CD8-positive, alpha-beta T cell (primary cell): ENCODE measurements at regions of chr17 and their contacts with region 1.

Region 1: DNA sequence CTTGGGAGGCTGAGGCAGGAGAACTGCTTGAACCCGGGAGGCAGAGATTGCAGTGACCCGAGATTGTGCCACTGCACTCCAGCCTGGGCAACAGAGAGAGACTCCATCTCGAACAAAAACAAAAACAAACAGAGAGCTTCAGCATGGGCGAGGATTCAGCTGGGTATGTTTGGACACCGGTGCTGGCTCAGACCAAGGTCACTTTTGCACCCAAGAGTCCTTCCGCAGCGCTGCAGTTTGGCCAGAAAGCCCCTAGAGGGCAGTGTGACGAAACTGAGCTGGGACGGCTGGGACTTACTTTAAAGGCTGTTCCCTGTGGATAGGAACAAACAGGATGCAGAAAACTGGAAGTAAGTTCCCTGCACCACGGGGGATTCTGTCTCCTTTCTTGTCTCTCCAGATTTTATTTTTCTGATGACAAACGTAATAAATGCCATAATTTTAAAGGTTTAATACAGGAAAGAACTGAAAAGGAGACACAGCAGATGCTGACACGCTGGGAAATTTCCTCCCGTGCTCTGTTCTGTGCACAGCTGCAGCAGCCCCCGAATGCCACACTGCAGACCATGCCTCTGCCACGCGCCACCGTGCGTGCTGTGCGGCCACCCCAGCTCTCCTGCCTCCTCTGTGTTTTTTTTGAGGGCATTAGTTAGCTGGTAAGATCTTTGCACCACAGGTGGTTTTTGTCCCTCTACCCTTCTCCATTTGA is 25.2 kb upstream of the USP36 start:
- DNase-seq: peak in 8 of 9 experiments; percentile 34 to 79 (median 66)
- ATAC-seq: peak; percentile 57
- H3K4me3 ChIP-seq: no peak overlapping the region
- H3K4me3 Mint-ChIP-seq: no peak overlapping the region
- H3K27ac ChIP-seq: no peak overlapping the region
- H3K27ac Mint-ChIP-seq: no peak overlapping the region
- H3K4me1 ChIP-seq: no peaks in the 10 kb centered on the region
- H3K4me1 Mint-ChIP-seq: peaks cover 3% of the 10 kb centered on the region
- H3K27me3 ChIP-seq: no peaks in the 10 kb centered on the region
- H3K27me3 Mint-ChIP-seq: peaks cover 5% of the 10 kb centered on the region
- CTCF ChIP-seq: peak; percentile 97

Region 2: GRCh38 chr17:78852709-78853121 is 13.1 kb before region 1 on chr17:
- CTCF ChIA-PET with region 1: interaction called, 30 read pairs
- POLR2A ChIA-PET with region 1: no interaction called
- intact Hi-C with region 1: no loop called
- DNase-seq: no peak
- ATAC-seq: no peak
- H3K4me3 ChIP-seq: no peak overlapping the region
- H3K4me3 Mint-ChIP-seq: no peak overlapping the region
- H3K27ac ChIP-seq: no peak overlapping the region
- H3K27ac Mint-ChIP-seq: no peak overlapping the region
- H3K4me1 ChIP-seq: no peaks in the 10 kb centered on the region
- H3K4me1 Mint-ChIP-seq: no peaks in the 10 kb centered on the region
- H3K27me3 ChIP-seq: no peaks in the 10 kb centered on the region
- H3K27me3 Mint-ChIP-seq: no peaks in the 10 kb centered on the region
- CTCF ChIP-seq: no peak

Region 3: DNA sequence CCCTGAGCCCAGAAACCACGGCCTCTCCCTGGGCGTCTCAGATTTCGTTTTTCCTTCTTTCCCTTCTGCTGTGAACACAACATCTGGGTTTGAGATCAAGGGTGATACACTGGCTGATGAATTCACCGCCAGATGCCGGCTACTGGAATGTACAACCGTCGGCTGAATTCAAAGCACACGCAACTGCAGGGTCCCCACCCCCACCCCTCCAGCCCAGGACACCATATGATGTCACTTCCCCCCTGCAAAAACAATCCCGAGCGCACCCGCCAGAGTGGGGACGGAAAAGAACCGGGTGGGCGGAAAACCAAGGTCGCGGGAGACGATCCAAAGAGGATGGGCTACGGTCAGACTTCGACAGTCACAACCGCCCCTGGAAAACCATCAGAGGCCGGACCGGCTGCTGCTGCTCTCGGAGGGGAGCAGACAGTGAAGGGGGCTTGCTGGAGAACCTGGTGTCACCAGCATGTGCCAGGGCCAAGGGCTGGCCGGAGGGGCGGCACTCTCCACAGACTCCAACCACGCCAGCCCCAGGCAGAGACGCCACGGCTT is 13.9 kb after region 1 on chr17:
- CTCF ChIA-PET with region 1: interaction called, 16 read pairs
- POLR2A ChIA-PET with region 1: no interaction called
- intact Hi-C with region 1: no loop called
- DNase-seq: peak in 5 of 9 experiments; percentile 20 to 68 (median 48)
- ATAC-seq: peak; percentile 51
- H3K4me3 ChIP-seq: peak overlapping the region; percentile 29 to 38
- H3K4me3 Mint-ChIP-seq: peak overlapping the region; percentile 78
- H3K27ac ChIP-seq: peak overlapping the region in 1 of 2 experiments; percentile 39
- H3K27ac Mint-ChIP-seq: peak overlapping the region; percentile 85
- H3K4me1 ChIP-seq: peaks cover 33% of the 10 kb centered on the region
- H3K4me1 Mint-ChIP-seq: peaks cover 37% of the 10 kb centered on the region
- H3K27me3 ChIP-seq: peaks cover 0 to 3% of the 10 kb centered on the region in 2 experiments
- H3K27me3 Mint-ChIP-seq: no peaks in the 10 kb centered on the region
- CTCF ChIP-seq: no peak

Region 4: GRCh38 chr17:78925234-78925633 is 59.4 kb after region 1 on chr17 and contains the start of gene TIMP2:
- CTCF ChIA-PET with region 1: interaction called, 11 read pairs
- POLR2A ChIA-PET with region 1: interaction called, 4 read pairs
- intact Hi-C with region 1: loop called (anchors 1 kb)
- DNase-seq: peak; percentile 46 to 85 (median 74)
- ATAC-seq: peak; percentile 83
- H3K4me3 ChIP-seq: peak within 1 kb of the TSS; percentile 45 to 55
- H3K4me3 Mint-ChIP-seq: peak within 1 kb of the TSS; percentile 80
- H3K27ac ChIP-seq: no peak within 1 kb of the TSS
- H3K27ac Mint-ChIP-seq: no peak within 1 kb of the TSS
- H3K4me1 ChIP-seq: peaks cover 13% of the 10 kb centered on the region
- H3K4me1 Mint-ChIP-seq: peaks cover 11% of the 10 kb centered on the region
- H3K27me3 ChIP-seq: peaks cover 0 to 3% of the 10 kb centered on the region in 2 experiments
- H3K27me3 Mint-ChIP-seq: peaks cover 5% of the 10 kb centered on the region
- CTCF ChIP-seq: peak; percentile 36
- total RNA-seq, gene TIMP2: 8.9 to 9.4 TPM